Panc1 (cell line): ENCODE measurements at regions of chr17 and their contacts with region 1.

Region 1: DNA sequence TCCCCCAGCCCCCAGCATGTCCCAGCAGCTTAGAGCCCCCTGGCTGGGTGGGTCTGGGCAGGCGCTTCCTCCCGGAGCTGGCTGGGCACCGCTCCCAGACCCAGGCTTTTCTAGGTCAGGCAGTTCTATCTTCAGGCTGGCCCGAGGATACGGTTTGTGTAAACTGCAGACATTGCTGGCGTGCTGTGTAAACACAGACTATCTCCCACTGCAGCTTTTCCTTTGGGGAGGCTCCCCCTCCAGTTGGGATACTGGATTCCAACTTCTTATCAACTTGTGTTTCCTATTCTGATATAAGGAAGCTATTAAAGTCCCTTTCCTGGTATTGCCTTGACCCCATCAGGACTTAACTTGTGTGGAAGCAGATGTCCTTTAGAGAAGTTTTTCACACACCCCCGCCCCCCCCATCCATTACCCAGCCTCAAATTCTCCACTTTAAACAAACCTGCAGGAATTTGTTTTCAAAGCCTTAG is 18.3 kb upstream of the GNA13 start:
- DNase-seq: no peak
- ATAC-seq: no peak
- H3K4me3 ChIP-seq: no peak overlapping the region
- H3K27ac ChIP-seq: no peak overlapping the region
- H3K4me1 ChIP-seq: no peaks in the 10 kb centered on the region; the same call in 1 of the 2 replicates
- H3K27me3 ChIP-seq: no peaks in the 10 kb centered on the region
- CTCF ChIP-seq: no peak

Region 2: GRCh38 chr17:65027305-65027704 is 47.5 kb before region 1 on chr17:
- CTCF ChIA-PET with region 1: no interaction called
- POLR2A ChIA-PET with region 1: interaction called, 15 read pairs
- in situ Hi-C with region 1: no loop called
- intact Hi-C with region 1: no loop called
- DNase-seq: no peak
- ATAC-seq: peak; percentile 73; the same call in 1 of the 2 replicates
- H3K4me3 ChIP-seq: no peak overlapping the region
- H3K27ac ChIP-seq: no peak overlapping the region
- H3K4me1 ChIP-seq: peaks cover 21% of the 10 kb centered on the region
- H3K27me3 ChIP-seq: no peaks in the 10 kb centered on the region
- CTCF ChIP-seq: peak; percentile 43

Region 3: GRCh38 chr17:65064452-65065019 is 10.3 kb before region 1 on chr17:
- CTCF ChIA-PET with region 1: interaction called, 9 read pairs
- POLR2A ChIA-PET with region 1: interaction called, 12 read pairs
- in situ Hi-C with region 1: no loop called
- intact Hi-C with region 1: no loop called
- DNase-seq: no peak
- ATAC-seq: peak; percentile 59
- H3K4me3 ChIP-seq: no peak overlapping the region
- H3K27ac ChIP-seq: no peak overlapping the region
- H3K4me1 ChIP-seq: no peaks in the 10 kb centered on the region; the same call in 1 of the 2 replicates
- H3K27me3 ChIP-seq: no peaks in the 10 kb centered on the region
- CTCF ChIP-seq: no peak